ENCODE measurements at regions of chr2 and their contacts with region 1.

Region 1: GRCh38 chr2:88190808-88191721 is 20.9 kb downstream of the THNSL2 start:
- DNase-seq: peak; percentile 70
- CTCF ChIP-seq: peak; percentile 67

Region 2: GRCh38 chr2:88206665-88207347 is 15.7 kb after region 1 on chr2:
- CTCF ChIA-PET with region 1: interaction called, 30 read pairs
- POLR2A ChIA-PET with region 1: no interaction called
- DNase-seq: no peak
- CTCF ChIP-seq: no peak

Region 3: GRCh38 chr2:88212251-88212790 is 21.3 kb after region 1 on chr2:
- CTCF ChIA-PET with region 1: interaction called, 30 read pairs
- POLR2A ChIA-PET with region 1: no interaction called
- DNase-seq: no peak
- CTCF ChIP-seq: peak; percentile 10

Region 4: GRCh38 chr2:88342749-88343148 is 151.7 kb after region 1 on chr2:
- CTCF ChIA-PET with region 1: no interaction called
- POLR2A ChIA-PET with region 1: no interaction called
- DNase-seq: no peak
- CTCF ChIP-seq: no peak

Region 5: GRCh38 chr2:88451811-88452565 is 260.9 kb after region 1 on chr2:
- CTCF ChIA-PET with region 1: interaction called, 11 read pairs
- POLR2A ChIA-PET with region 1: no interaction called
- DNase-seq: no peak
- CTCF ChIP-seq: no peak

Region 6: GRCh38 chr2:88680266-88680902 is 489.3 kb after region 1 on chr2:
- CTCF ChIA-PET with region 1: interaction called, 11 read pairs
- POLR2A ChIA-PET with region 1: no interaction called
- DNase-seq: no peak
- CTCF ChIP-seq: no peak